PC-9 (cell line): ENCODE measurements at regions of chr1 and their contacts with region 1.

Region 1: DNA sequence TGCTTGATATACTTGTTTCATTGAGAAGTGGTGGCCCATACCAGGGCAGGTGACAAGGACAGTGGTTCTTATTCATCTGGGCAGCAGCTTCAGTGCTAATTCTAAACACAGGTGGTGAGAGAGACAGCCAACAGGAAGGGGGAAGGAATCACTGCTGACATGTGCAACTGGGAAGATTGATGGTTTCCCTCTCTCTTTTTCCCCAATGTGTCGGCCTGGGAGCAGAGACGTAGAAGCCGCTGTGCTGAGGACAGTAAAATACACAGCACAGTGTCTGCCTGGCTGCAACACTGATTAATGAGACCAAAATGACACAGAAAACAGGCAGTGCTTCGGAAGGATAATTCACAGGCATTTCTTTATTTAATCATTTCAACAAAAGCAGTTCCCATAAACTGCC is 48.8 kb downstream of the WARS2 start:
- DNase-seq: no peak
- H3K4me3 ChIP-seq: no peak overlapping the region
- H3K27ac ChIP-seq: no peak overlapping the region
- H3K4me1 ChIP-seq: no peaks in the 10 kb centered on the region
- H3K27me3 ChIP-seq: no peaks in the 10 kb centered on the region
- CTCF ChIP-seq: no peak

Region 2: GRCh38 chr1:119080586-119080985 is 11.0 kb before region 1 on chr1:
- CTCF ChIA-PET with region 1: no interaction called
- POLR2A ChIA-PET with region 1: no interaction called
- intact Hi-C with region 1: loop called (anchors 1 kb)
- DNase-seq: peak; percentile 28 to 35
- H3K4me3 ChIP-seq: no peak overlapping the region
- H3K27ac ChIP-seq: no peak overlapping the region
- H3K4me1 ChIP-seq: no peaks in the 10 kb centered on the region
- H3K27me3 ChIP-seq: no peaks in the 10 kb centered on the region
- CTCF ChIP-seq: no peak

Region 3: GRCh38 chr1:119124764-119125163 is 33.1 kb after region 1 on chr1:
- CTCF ChIA-PET with region 1: no interaction called
- POLR2A ChIA-PET with region 1: no interaction called
- intact Hi-C with region 1: loop called (anchors 2 kb)
- DNase-seq: no peak
- H3K4me3 ChIP-seq: no peak overlapping the region
- H3K27ac ChIP-seq: no peak overlapping the region
- H3K4me1 ChIP-seq: no peaks in the 10 kb centered on the region
- H3K27me3 ChIP-seq: no peaks in the 10 kb centered on the region
- CTCF ChIP-seq: no peak

Region 4: DNA sequence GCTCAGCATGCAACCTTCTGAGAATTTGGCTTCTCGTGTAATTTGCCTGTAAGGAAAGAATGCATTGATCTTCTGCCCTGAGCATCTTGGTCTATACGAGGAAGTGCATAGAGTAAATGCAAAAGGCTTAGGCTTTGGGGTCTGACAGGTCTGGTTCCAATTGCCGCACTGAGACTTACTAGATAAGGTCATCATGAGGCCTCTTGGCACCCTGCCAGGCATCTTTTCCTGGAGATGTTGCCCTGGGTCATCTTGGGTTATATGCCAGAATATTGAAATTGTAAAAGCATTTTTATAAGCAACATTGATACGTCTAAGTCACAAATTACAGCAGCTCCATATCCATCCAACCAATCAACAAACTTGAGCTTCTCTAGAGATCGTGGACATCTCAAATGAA is 157.7 kb after region 1 on chr1:
- CTCF ChIA-PET with region 1: no interaction called
- POLR2A ChIA-PET with region 1: no interaction called
- intact Hi-C with region 1: no loop called
- DNase-seq: peak in 1 of 2 experiments; percentile 28
- H3K4me3 ChIP-seq: no peak overlapping the region
- H3K27ac ChIP-seq: no peak overlapping the region
- H3K4me1 ChIP-seq: peaks cover 14% of the 10 kb centered on the region
- H3K27me3 ChIP-seq: no peaks in the 10 kb centered on the region
- CTCF ChIP-seq: no peak